Right ventricle myocardium superior (tissue), 1 donor: ENCODE measurements at regions of chr4 and their contacts with region 1.

Region 1: DNA sequence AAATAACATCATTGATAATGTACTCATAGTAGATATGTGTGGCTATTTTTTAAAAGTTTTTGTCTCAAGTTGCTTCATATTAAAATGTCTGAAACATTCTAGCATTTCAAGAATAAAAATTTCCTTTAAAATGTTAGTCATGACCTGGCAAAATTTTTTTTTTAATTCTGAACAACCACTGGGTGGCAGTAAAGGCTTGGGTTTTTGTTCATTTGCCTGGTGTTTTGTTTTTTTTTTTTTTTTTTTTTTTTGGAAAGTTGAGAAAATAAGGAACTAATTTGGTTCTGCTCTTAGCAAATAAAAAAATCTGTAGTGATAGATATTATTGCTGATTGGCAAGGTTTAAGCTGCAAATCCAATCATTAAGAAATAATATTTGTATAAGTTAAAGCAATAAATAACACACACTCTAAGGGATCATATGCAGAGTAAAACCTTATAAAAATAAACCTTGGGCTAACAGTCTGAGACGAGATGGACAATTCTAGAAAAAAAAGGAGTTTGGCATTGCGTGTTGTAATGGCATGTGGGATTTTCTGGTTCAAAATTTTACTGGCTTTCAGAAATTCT is 81.4 kb downstream of the CEP44 start:
- DNase-seq: no peak
- ATAC-seq: no peak

Region 2: DNA sequence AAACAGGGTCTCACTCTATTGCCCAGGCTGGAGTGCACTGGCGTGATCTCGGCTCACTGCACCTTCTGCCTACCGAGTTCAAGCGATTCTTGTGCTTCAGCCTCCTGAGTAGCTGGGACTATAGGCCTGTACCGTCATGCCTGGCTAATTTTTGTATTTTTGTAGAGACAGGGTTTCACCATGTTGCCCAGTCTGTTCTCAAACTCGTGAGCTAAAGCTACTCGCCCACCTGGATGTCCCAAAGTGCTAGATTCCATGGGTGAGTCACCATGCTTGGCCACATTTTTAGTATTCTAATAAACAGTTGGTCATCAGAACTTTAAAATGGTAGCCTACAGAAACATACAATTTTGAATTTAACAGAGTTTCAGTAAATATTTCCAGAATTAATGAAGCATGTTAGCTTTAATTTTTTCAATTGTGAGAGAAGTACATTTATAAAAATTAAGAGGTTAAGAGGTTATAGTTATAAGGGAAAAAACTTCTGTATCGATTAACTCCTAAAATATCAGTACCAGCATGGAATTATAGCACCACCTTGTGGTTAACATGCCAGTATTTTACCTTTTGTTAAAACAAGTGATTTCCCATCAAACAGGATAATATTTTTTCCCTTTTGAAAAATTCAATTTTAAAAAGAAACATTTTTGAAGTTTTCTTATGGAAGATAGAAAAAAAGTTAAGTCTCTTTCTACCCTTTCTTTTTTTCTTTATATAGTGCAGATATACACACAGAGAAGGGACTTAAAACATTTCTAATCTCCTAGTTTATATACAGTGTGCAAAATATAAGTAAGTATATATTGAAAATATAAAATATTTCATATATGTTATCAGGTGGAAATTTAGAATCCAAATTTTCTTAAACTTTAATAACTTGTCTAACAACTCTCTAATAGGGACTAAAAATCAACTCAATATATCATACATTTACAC is 46.0 kb before region 1 on chr4:
- intact Hi-C with region 1: no loop called
- DNase-seq: no peak
- ATAC-seq: no peak

Region 3: GRCh38 chr4:174631901-174632758 is 267.0 kb after region 1 on chr4:
- intact Hi-C with region 1: loop called (anchors 5 kb)
- DNase-seq: no peak
- ATAC-seq: peak; percentile 60

Region 4: GRCh38 chr4:174714393-174715211 is 349.5 kb after region 1 on chr4:
- intact Hi-C with region 1: loop called (anchors 10 kb)
- DNase-seq: no peak
- ATAC-seq: no peak